MCF 10A (cell line): ENCODE measurements at regions of chr19 and their contacts with region 1.

Region 1: GRCh38 chr19:10717356-10718204 is at the start of gene DNM2:
- DNase-seq: peak; percentile 100
- H3K4me3 Mint-ChIP-seq: peak within 1 kb of the TSS; percentile 86
- H3K27ac Mint-ChIP-seq: peak within 1 kb of the TSS; percentile 86
- H3K4me1 Mint-ChIP-seq: peaks cover 15% of the 10 kb centered on the region
- H3K27me3 Mint-ChIP-seq: no peaks in the 10 kb centered on the region
- CTCF ChIP-seq: peak; percentile 62
- total RNA-seq, gene DNM2: 114 and 125 TPM in 2 replicates

Region 2: GRCh38 chr19:10499551-10500246 is 217.9 kb before region 1 on chr19:
- CTCF ChIA-PET with region 1: no interaction called
- POLR2A ChIA-PET with region 1: no interaction called
- intact Hi-C with region 1: no loop called
- DNase-seq: no peak
- H3K4me3 Mint-ChIP-seq: no peak overlapping the region
- H3K27ac Mint-ChIP-seq: peak overlapping the region; percentile 35
- H3K4me1 Mint-ChIP-seq: peaks cover 6% of the 10 kb centered on the region
- H3K27me3 Mint-ChIP-seq: no peaks in the 10 kb centered on the region
- CTCF ChIP-seq: no peak

Region 3: DNA sequence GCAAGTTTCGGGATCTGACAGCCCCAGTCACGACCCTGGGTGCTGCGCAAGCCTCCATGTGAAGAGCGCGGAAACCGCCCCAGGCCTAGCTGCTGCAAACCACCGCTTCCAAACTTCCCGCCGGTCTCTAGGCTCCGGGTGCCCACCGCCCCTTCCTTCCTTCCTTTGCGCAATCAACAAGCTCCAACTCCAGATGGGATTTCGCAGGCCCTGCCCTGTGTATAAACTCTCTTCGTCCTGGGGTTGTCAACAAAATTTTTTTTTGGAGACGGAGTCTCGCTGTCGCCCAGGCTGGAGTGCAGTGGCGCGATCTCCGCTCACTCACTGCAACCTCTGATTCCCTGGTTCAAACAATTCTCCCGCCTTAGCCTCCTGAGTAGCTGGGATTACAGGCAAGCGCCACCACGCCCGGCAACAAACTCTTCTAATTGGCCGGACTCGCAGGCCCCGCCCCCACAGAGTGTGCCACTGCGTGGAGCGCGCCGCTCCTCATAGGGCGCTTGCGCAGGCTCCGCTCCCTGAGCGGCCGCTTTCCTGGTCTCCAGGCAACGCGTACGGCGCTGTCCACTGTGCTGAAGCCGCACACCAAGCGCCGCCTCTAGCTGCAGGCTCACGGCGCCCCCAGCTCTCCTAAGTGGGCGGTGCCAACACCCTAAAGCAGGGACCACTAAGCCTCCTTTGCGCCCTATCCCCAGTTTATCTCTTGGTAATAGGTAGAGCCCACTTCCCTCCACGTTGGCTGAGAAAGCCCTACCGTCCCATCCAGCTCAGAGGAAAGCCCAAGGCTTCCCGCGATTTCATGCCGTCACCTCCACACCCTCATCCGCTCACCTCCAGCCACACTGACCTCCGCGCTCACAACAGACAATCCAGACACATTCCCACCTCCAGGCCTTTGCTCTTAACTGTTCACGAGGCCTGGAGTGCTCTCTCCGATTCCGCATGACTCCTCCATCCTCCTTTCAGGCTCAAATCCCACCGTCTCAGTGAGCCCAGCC is 21.9 kb before region 1 on chr19:
- CTCF ChIA-PET with region 1: interaction called, 55 read pairs
- POLR2A ChIA-PET with region 1: interaction called, 25 read pairs
- intact Hi-C with region 1: no loop called
- DNase-seq: peak; percentile 95
- H3K4me3 Mint-ChIP-seq: peak overlapping the region; percentile 66
- H3K27ac Mint-ChIP-seq: no peak overlapping the region
- H3K4me1 Mint-ChIP-seq: peaks cover 11% of the 10 kb centered on the region
- H3K27me3 Mint-ChIP-seq: no peaks in the 10 kb centered on the region
- CTCF ChIP-seq: no peak

Region 4: DNA sequence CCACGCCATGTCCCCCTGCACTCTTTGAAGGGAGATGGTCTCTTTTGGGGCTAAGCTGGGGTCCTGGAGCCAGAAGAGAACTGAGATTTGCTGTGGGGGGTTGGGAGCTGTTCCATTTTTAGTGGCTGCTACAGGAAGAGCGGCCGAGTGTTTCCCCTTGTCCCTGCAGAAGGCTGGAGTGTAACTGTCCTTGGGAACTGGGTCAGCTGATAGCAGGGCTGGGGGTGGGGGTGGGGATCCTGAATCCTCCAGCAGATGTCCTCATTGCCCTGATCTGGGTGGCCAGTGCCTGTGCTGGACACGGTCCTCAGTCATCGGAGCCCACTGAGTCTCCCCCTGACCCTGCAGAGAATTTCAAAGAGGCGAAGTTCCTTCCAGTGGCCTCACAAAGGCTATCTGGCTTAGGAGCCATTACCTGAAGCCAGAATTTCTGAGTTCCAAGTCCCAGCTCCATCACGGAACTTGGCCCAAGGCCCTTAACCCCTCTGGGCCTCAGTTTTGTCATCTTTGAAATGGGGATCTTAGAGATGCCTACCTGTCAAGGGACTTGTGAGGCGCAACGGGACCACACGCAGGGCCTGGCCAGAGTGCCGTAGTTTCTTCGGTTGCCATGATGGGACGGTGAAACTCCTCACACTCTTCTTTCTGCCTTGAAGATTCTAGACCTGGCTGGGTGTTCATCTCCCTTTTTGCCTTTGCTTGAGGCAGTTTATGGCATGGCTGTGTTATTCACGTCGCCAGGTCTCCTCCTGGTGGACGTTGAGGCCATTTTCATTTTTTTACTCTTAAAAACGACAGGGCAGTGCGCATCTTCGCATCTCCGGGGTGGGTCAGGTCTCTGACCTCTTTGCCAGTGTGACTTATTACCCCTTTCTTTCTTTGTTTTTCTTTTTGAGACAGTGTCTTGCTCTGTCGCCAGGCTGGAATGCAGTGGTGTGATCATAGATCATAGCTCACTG is 52.2 kb after region 1 on chr19:
- CTCF ChIA-PET with region 1: interaction called, 4 read pairs
- POLR2A ChIA-PET with region 1: interaction called, 3 read pairs
- intact Hi-C with region 1: loop called (anchors 5 kb)
- DNase-seq: peak; percentile 29
- H3K4me3 Mint-ChIP-seq: no peak overlapping the region
- H3K27ac Mint-ChIP-seq: peak overlapping the region; percentile 78
- H3K4me1 Mint-ChIP-seq: peaks cover 6% of the 10 kb centered on the region
- H3K27me3 Mint-ChIP-seq: no peaks in the 10 kb centered on the region
- CTCF ChIP-seq: no peak

Region 5: GRCh38 chr19:10864538-10864899 is 146.9 kb after region 1 on chr19:
- CTCF ChIA-PET with region 1: interaction called, 40 read pairs
- POLR2A ChIA-PET with region 1: interaction called, 12 read pairs
- intact Hi-C with region 1: loop called (anchors 1 kb)
- DNase-seq: peak; percentile 85
- H3K4me3 Mint-ChIP-seq: no peak overlapping the region
- H3K27ac Mint-ChIP-seq: peak overlapping the region; percentile 37
- H3K4me1 Mint-ChIP-seq: peaks cover 17% of the 10 kb centered on the region
- H3K27me3 Mint-ChIP-seq: no peaks in the 10 kb centered on the region
- CTCF ChIP-seq: peak; percentile 89